SK-N-SH (cell line): ENCODE measurements at regions of chr13 and their contacts with region 1.

Region 1: DNA sequence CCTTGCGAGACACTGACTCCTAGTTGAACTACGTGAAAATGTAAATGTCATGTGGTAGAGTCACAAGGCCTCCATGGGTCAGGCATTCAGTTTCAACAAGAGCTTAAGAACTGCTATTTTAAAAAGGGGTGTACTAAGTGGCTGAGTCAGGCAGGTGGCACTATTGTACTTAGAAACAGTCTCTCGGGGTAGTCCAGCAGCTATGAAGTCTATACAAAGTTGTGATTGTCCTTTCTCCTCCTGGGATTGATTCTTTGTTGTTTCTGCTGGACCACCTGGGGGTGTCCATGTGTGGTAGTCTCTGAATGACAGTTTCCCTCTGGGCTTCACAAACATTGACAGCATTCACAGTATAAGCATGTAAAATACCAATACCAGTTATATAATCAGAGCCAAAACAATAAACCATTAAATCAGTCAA is 33.0 kb downstream of the UGGT2 start:
- DNase-seq: peak; percentile 56
- H3K4me3 ChIP-seq: no peak overlapping the region; a peak in 1 of 4 replicates
- H3K27ac ChIP-seq: no peak overlapping the region; a peak in 1 of 4 replicates
- H3K4me1 ChIP-seq: no peaks in the 10 kb centered on the region
- H3K27me3 ChIP-seq: no peaks in the 10 kb centered on the region
- CTCF ChIP-seq: peak; percentile 69
- EP300 ChIP-seq: no peak
- RAD21 ChIP-seq: peak; percentile 91

Region 2: GRCh38 chr13:95948656-95949055 is 71.5 kb before region 1 on chr13:
- CTCF ChIA-PET with region 1: no interaction called
- POLR2A ChIA-PET with region 1: no interaction called
- DNase-seq: no peak
- H3K4me3 ChIP-seq: no peak overlapping the region
- H3K27ac ChIP-seq: no peak overlapping the region
- H3K4me1 ChIP-seq: no peaks in the 10 kb centered on the region
- H3K27me3 ChIP-seq: no peaks in the 10 kb centered on the region
- CTCF ChIP-seq: no peak
- EP300 ChIP-seq: no peak
- RAD21 ChIP-seq: no peak

Region 3: GRCh38 chr13:96034662-96035061 is 14.5 kb after region 1 on chr13:
- CTCF ChIA-PET with region 1: interaction called, 11 read pairs
- POLR2A ChIA-PET with region 1: no interaction called
- DNase-seq: no peak
- H3K4me3 ChIP-seq: no peak overlapping the region
- H3K27ac ChIP-seq: no peak overlapping the region
- H3K4me1 ChIP-seq: no peaks in the 10 kb centered on the region
- H3K27me3 ChIP-seq: no peaks in the 10 kb centered on the region
- CTCF ChIP-seq: no peak
- EP300 ChIP-seq: no peak
- RAD21 ChIP-seq: no peak

Region 4: GRCh38 chr13:96200810-96201209 is 180.6 kb after region 1 on chr13:
- CTCF ChIA-PET with region 1: interaction called, 12 read pairs
- POLR2A ChIA-PET with region 1: no interaction called
- DNase-seq: peak; percentile 50
- H3K4me3 ChIP-seq: no peak overlapping the region
- H3K27ac ChIP-seq: no peak overlapping the region
- H3K4me1 ChIP-seq: peaks cover 0 to 3% of the 10 kb centered on the region in 2 experiments; a peak in 1 of 4 replicates
- H3K27me3 ChIP-seq: no peaks in the 10 kb centered on the region
- CTCF ChIP-seq: no peak
- EP300 ChIP-seq: peak in 1 of 2 experiments; percentile 89; a peak in 2 of 4 replicates
- RAD21 ChIP-seq: peak; percentile 67

Region 5: GRCh38 chr13:96822895-96823294 is 802.7 kb after region 1 on chr13:
- CTCF ChIA-PET with region 1: interaction called, 57 read pairs
- POLR2A ChIA-PET with region 1: no interaction called
- DNase-seq: peak; percentile 37
- H3K4me3 ChIP-seq: no peak overlapping the region
- H3K27ac ChIP-seq: no peak overlapping the region
- H3K4me1 ChIP-seq: peaks cover 0 to 3% of the 10 kb centered on the region in 2 experiments; a peak in 1 of 4 replicates
- H3K27me3 ChIP-seq: no peaks in the 10 kb centered on the region
- CTCF ChIP-seq: peak; percentile 23; the same call in 1 of the 2 replicates
- EP300 ChIP-seq: no peak
- RAD21 ChIP-seq: peak; percentile 52